HCT116 (cell line): ENCODE measurements at regions of chr3 and their contacts with region 1.

Region 1: GRCh38 chr3:178443634-178444033 is 92.6 kb upstream of the KCNMB2 start:
- DNase-seq: no peak
- ATAC-seq: no peak
- H3K4me3 ChIP-seq: no peak overlapping the region
- H3K27ac ChIP-seq: no peak overlapping the region
- H3K4me1 ChIP-seq: peaks cover 0 to 5% of the 10 kb centered on the region in 2 experiments; a peak in 1 of 4 replicates
- H3K27me3 ChIP-seq: no peaks in the 10 kb centered on the region
- CTCF ChIP-seq: peak in 2 of 3 experiments; percentile 21 to 43; a peak in 3 of 6 replicates
- POLR2A ChIP-seq: no peak
- RAD21 ChIP-seq: peak; percentile 61

Region 2: GRCh38 chr3:178777718-178778411 is 334.2 kb after region 1 on chr3:
- CTCF ChIA-PET with region 1: no interaction called
- POLR2A ChIA-PET with region 1: no interaction called
- RAD21 ChIA-PET with region 1: no interaction called
- intact Hi-C with region 1: no loop called
- DNase-seq: peak; percentile 27
- ATAC-seq: no peak
- H3K4me3 ChIP-seq: no peak overlapping the region
- H3K27ac ChIP-seq: no peak overlapping the region
- H3K4me1 ChIP-seq: peaks cover 0 to 9% of the 10 kb centered on the region in 2 experiments; a peak in 3 of 4 replicates
- H3K27me3 ChIP-seq: no peaks in the 10 kb centered on the region
- CTCF ChIP-seq: no peak
- POLR2A ChIP-seq: no peak
- RAD21 ChIP-seq: no peak

Region 3: GRCh38 chr3:178966299-178967176 is 522.9 kb after region 1 on chr3:
- CTCF ChIA-PET with region 1: interaction called, 15 read pairs
- POLR2A ChIA-PET with region 1: no interaction called
- RAD21 ChIA-PET with region 1: no interaction called
- intact Hi-C with region 1: no loop called
- DNase-seq: peak; percentile 29
- ATAC-seq: peak; percentile 61
- H3K4me3 ChIP-seq: no peak overlapping the region
- H3K27ac ChIP-seq: no peak overlapping the region
- H3K4me1 ChIP-seq: peaks cover 0 to 5% of the 10 kb centered on the region in 2 experiments; a peak in 2 of 4 replicates
- H3K27me3 ChIP-seq: no peaks in the 10 kb centered on the region
- CTCF ChIP-seq: peak; percentile 35 to 83 (median 64); a peak in 5 of 6 replicates
- POLR2A ChIP-seq: no peak
- RAD21 ChIP-seq: peak; percentile 89